Activated naive CD4-positive, alpha-beta T cell treated with anti-CD3 and anti-CD28 coated beads for 36 hours (primary cell): ENCODE measurements at regions of chr12 and their contacts with region 1.

Region 1: GRCh38 chr12:4320853-4321701 is at the start of gene TIGAR:
- DNase-seq: peak; percentile 91
- H3K4me3 Mint-ChIP-seq: peak within 1 kb of the TSS; percentile 83
- H3K27ac Mint-ChIP-seq: peak within 1 kb of the TSS; percentile 87
- H3K4me1 Mint-ChIP-seq: peaks cover 34% of the 10 kb centered on the region
- H3K27me3 Mint-ChIP-seq: no peaks in the 10 kb centered on the region
- total RNA-seq, gene TIGAR: 10.3 to 12.8 TPM

Region 2: GRCh38 chr12:4174417-4174816 is 146.7 kb before region 1 on chr12:
- CTCF ChIA-PET with region 1: no interaction called
- intact Hi-C with region 1: no loop called
- DNase-seq: no peak
- H3K4me3 Mint-ChIP-seq: no peak overlapping the region
- H3K27ac Mint-ChIP-seq: no peak overlapping the region
- H3K4me1 Mint-ChIP-seq: peaks cover 40% of the 10 kb centered on the region
- H3K27me3 Mint-ChIP-seq: no peaks in the 10 kb centered on the region

Region 3: GRCh38 chr12:4366090-4366489 is 45.0 kb after region 1 on chr12:
- CTCF ChIA-PET with region 1: no interaction called
- intact Hi-C with region 1: no loop called
- DNase-seq: no peak
- H3K4me3 Mint-ChIP-seq: no peak overlapping the region
- H3K27ac Mint-ChIP-seq: no peak overlapping the region
- H3K4me1 Mint-ChIP-seq: no peaks in the 10 kb centered on the region
- H3K27me3 Mint-ChIP-seq: peaks cover 4% of the 10 kb centered on the region

Region 4: GRCh38 chr12:4538207-4539160 is 217.4 kb after region 1 on chr12 and contains the start of gene RAD51AP1:
- CTCF ChIA-PET with region 1: no interaction called
- intact Hi-C with region 1: loop called (anchors 1 kb)
- DNase-seq: peak; percentile 97
- H3K4me3 Mint-ChIP-seq: peak within 1 kb of the TSS; percentile 97
- H3K27ac Mint-ChIP-seq: peak within 1 kb of the TSS; percentile 98
- H3K4me1 Mint-ChIP-seq: peaks cover 25% of the 10 kb centered on the region
- H3K27me3 Mint-ChIP-seq: no peaks in the 10 kb centered on the region
- total RNA-seq, gene RAD51AP1: 69.5 to 76.5 TPM

Region 5: DNA sequence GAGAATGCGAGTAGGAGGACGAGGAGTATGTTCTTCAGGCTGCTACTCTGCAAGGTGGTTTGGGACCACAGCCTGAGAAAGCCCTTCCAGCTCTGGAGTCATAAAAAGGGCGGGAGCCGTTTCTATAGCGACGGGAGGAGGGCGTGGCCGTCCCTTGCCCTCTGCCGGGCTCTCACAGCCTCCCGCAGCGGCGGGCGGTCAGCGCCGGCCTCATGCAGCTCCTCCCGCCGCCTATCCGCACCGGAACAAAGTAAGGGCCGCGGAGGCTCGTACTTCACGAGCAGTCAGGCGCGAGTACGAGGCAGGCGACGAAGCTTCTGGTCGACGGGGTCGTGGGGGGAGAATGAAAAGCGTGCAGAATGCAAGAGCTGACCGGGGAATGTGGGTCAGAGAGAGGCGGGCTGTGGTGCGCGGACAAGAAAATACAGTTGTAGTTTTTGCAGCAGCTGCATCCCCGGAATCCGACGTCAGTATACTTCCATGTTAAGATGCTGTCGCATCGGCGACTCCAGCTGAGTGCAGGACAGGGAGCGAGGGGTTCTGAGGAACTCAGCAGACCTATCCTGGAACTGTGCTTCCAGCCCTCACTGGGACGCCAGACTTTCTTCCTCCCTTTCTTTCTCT is 241.1 kb after region 1 on chr12 and contains the start of gene DYRK4:
- CTCF ChIA-PET with region 1: no interaction called
- intact Hi-C with region 1: no loop called
- DNase-seq: peak; percentile 16
- H3K4me3 Mint-ChIP-seq: no peak within 1 kb of the TSS
- H3K27ac Mint-ChIP-seq: no peak within 1 kb of the TSS
- H3K4me1 Mint-ChIP-seq: peaks cover 12% of the 10 kb centered on the region
- H3K27me3 Mint-ChIP-seq: peaks cover 28% of the 10 kb centered on the region
- total RNA-seq, gene DYRK4: 27.3 to 35.1 TPM